AG04450 (cell line): ENCODE measurements at regions of chr15 and their contacts with region 1.

Region 1: GRCh38 chr15:40941528-40942336 is 11.5 kb upstream of the CHAC1 start:
- DNase-seq: peak; percentile 27
- H3K4me3 ChIP-seq: peak overlapping the region; percentile 54
- H3K27ac ChIP-seq: peak overlapping the region; percentile 81
- H3K27me3 ChIP-seq: no peaks in the 10 kb centered on the region
- CTCF ChIP-seq: peak; percentile 36; the same call in 1 of the 2 replicates

Region 2: GRCh38 chr15:40814901-40815670 is 126.6 kb before region 1 on chr15:
- CTCF ChIA-PET with region 1: no interaction called
- POLR2A ChIA-PET with region 1: no interaction called
- DNase-seq: no peak
- H3K4me3 ChIP-seq: no peak overlapping the region
- H3K27ac ChIP-seq: no peak overlapping the region
- H3K27me3 ChIP-seq: no peaks in the 10 kb centered on the region
- CTCF ChIP-seq: no peak

Region 3: GRCh38 chr15:40928821-40929659 is 12.7 kb before region 1 on chr15 and contains the start of gene DLL4:
- CTCF ChIA-PET with region 1: interaction called, 30 read pairs
- POLR2A ChIA-PET with region 1: interaction called, 7 read pairs
- DNase-seq: peak; percentile 24
- H3K4me3 ChIP-seq: peak within 1 kb of the TSS; percentile 63
- H3K27ac ChIP-seq: no peak within 1 kb of the TSS
- H3K27me3 ChIP-seq: peaks cover 42% of the 10 kb centered on the region
- CTCF ChIP-seq: no peak
- polyA plus RNA-seq, gene DLL4: 1.5 and 2.6 TPM in 2 replicates

Region 4: GRCh38 chr15:40974879-40975278 is 33.1 kb after region 1 on chr15:
- CTCF ChIA-PET with region 1: interaction called, 17 read pairs
- POLR2A ChIA-PET with region 1: no interaction called
- DNase-seq: no peak
- H3K4me3 ChIP-seq: no peak overlapping the region
- H3K27ac ChIP-seq: no peak overlapping the region
- H3K27me3 ChIP-seq: no peaks in the 10 kb centered on the region
- CTCF ChIP-seq: no peak

Region 5: DNA sequence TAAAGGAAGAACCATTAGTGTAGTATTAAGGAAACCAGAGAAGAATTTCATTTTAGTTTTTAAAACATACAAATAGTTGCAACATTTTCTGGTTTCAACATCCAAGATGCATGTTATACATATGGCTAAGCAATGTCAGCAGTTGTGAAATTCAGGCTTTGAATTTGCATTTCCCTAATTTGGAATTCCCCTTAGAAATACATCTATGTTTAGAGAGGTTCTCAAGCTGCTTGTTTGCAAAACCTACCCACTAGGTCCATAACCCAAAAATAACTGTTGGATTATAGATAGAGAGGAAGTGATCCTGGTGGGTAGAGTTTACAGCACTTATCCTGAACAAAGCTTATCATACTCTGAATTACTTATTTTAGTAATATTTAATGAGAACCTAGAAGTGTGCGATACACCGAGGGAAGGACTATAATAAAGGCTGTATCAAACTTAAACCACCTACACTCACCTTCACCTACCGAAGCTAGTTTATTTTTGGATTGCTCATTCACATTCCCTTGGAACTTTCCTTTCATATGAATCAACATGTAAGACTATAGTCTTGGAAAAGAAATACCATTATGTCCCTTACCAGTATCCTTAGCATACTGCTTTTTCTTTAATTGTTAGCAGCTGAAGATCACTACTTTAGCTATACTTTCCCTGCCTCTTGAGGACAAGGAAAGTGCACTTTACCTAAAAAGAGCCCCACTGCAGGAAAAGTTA is 72.1 kb after region 1 on chr15:
- CTCF ChIA-PET with region 1: interaction called, 89 read pairs
- POLR2A ChIA-PET with region 1: interaction called, 4 read pairs
- DNase-seq: peak; percentile 59
- H3K4me3 ChIP-seq: no peak overlapping the region
- H3K27ac ChIP-seq: peak overlapping the region; percentile 63
- H3K27me3 ChIP-seq: no peaks in the 10 kb centered on the region
- CTCF ChIP-seq: no peak